ENCODE measurements at regions of chr10 and their contacts with region 1.

Region 1: DNA sequence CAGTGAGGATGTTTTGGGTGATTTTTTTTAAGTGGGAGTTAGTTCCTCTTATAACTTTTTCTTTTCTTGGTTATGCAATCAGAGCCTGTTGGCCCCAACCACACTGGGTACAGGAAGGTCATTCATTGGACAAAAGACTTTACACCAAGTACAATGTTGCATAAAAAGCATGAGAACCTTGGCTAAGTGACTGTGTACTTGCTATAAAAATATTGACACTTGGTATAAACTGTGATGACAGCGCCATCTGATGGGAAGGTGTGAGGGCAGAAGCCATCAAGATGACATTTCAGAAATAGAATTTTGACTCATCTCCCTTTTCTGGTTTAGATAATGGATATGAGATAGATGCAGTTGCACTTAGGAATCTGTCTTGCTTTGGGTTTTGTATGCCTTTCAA is 126.4 kb upstream of the CCDC6 start:
- DNase-seq: peak; percentile 56
- H3K4me3 ChIP-seq: no peak overlapping the region
- H3K27ac ChIP-seq: no peak overlapping the region
- H3K4me1 ChIP-seq: no peaks in the 10 kb centered on the region
- H3K27me3 ChIP-seq: no peaks in the 10 kb centered on the region
- CTCF ChIP-seq: peak; percentile 40 to 42
- POLR2A ChIP-seq: no peak

Region 2: GRCh38 chr10:59240582-59241183 is 792.0 kb before region 1 on chr10:
- CTCF ChIA-PET with region 1: no interaction called
- POLR2A ChIA-PET with region 1: no interaction called
- dilution Hi-C with region 1: no loop called
- intact Hi-C with region 1: loop called (anchors 1 kb)
- DNase-seq: peak; percentile 52
- H3K4me3 ChIP-seq: no peak overlapping the region
- H3K27ac ChIP-seq: no peak overlapping the region
- H3K4me1 ChIP-seq: no peaks in the 10 kb centered on the region
- H3K27me3 ChIP-seq: no peaks in the 10 kb centered on the region
- CTCF ChIP-seq: peak; percentile 18 to 22
- POLR2A ChIP-seq: no peak

Region 3: GRCh38 chr10:60130130-60130579 is 97.4 kb after region 1 on chr10:
- CTCF ChIA-PET with region 1: no interaction called
- POLR2A ChIA-PET with region 1: no interaction called
- dilution Hi-C with region 1: no loop called
- intact Hi-C with region 1: no loop called
- DNase-seq: no peak
- H3K4me3 ChIP-seq: no peak overlapping the region
- H3K27ac ChIP-seq: no peak overlapping the region
- H3K4me1 ChIP-seq: no peaks in the 10 kb centered on the region
- H3K27me3 ChIP-seq: no peaks in the 10 kb centered on the region
- CTCF ChIP-seq: no peak
- POLR2A ChIP-seq: no peak